Spleen (tissue), 13 donors: ENCODE measurements at regions of chr9 and their contacts with region 1.

Region 1: DNA sequence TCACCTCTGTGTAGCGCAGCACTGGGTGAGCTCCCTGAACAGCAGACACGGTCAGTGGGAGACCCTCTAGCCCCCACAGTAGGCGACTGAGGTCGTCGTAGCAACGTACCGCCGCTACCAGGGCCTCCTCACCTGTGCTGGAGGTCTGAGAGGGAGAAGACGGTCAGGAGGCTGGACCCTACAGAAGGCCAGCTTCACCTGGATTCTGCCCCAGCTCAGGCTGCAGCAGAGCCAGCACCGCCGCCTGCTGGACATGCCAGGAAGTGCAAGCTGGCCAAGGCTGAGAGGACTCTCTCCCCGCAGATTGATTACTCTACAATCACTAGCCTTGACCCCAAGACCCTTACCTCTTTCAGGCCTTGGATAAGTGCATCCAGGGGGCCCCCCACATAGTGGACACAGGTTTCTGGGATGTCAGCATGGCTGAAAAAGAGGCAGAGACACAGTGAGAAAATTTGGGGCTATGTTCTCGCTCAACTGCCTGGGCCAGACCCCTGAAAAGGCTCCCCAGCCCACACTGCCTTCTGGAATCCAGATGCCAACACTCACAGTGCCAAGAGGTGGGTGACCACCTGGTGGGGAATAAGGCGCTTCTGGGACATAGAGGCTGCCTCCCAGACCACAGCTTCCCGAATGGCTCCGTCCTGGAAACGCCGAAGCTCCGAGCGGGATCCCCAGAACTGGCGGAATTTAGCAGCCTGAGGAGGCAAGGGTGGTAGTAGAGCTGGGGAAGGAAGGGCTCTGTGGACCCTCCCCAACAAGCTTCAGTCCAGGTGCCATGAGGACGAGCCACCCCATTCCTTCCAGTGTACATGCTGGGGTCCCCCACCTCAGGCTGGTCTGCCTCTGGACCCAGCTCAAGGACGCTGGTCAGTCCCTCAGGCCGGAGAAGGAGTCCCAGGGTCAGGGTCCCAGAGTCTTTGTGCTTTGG is 6.9 kb downstream of the NOL6 start:
- DNase-seq: peak; percentile 92
- H3K4me3 ChIP-seq: no peak overlapping the region
- H3K27ac ChIP-seq: no peak overlapping the region
- H3K4me1 ChIP-seq: peaks cover 0 to 18% (median 3%) of the 10 kb centered on the region in 6 donors
- H3K27me3 ChIP-seq: no peaks in the 10 kb centered on the region
- CTCF ChIP-seq: peak; percentile 82 to 97 (median 95)
- POLR2A ChIP-seq: no peak

Region 2: GRCh38 chr9:33287087-33287490 is 179.7 kb before region 1 on chr9:
- intact Hi-C with region 1: loop called (anchors 10 kb)
- DNase-seq: no peak
- H3K4me3 ChIP-seq: no peak overlapping the region
- H3K27ac ChIP-seq: peak overlapping the region in 4 of 8 donors; percentile 29 to 54 (median 42)
- H3K4me1 ChIP-seq: peaks cover 13 to 55% (median 32%) of the 10 kb centered on the region in 6 donors
- H3K27me3 ChIP-seq: no peaks in the 10 kb centered on the region
- CTCF ChIP-seq: peak; percentile 29 to 71 (median 68)
- POLR2A ChIP-seq: no peak

Region 3: GRCh38 chr9:33350310-33350709 is 116.5 kb before region 1 on chr9:
- intact Hi-C with region 1: no loop called
- DNase-seq: no peak
- H3K4me3 ChIP-seq: no peak overlapping the region
- H3K27ac ChIP-seq: no peak overlapping the region
- H3K4me1 ChIP-seq: peaks cover 0 to 13% (median 0%) of the 10 kb centered on the region in 6 donors
- H3K27me3 ChIP-seq: no peaks in the 10 kb centered on the region
- CTCF ChIP-seq: no peak
- POLR2A ChIP-seq: no peak

Region 4: DNA sequence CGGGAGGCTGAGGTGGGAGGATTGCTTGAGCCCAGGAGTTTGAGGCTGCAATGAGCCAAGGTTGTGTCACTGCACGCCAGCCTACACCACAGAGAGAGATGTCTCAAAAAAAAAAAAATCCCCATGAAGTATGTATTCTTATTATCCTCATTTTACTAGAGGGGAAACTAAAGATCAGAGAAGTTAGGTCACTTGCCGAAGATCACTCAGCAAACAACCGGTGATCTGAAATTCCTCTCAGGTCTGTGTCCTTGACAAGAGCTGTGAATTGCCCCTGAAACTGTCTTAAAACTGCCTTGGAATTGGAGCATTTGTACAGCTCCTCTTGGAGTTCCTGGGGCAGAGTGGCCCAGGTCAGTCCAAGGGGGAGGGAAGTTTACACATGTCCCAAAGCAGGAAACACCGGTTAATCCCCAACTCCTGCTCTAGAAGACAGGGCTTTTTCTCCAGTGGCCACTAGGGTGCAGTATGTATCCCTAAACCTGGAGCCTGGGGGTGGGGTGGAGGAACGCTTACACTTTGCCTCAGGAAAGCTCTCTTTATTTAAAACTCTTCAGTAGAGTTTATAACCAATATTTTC is 92.1 kb before region 1 on chr9:
- intact Hi-C with region 1: loop called (anchors 10 kb)
- DNase-seq: peak; percentile 81
- H3K4me3 ChIP-seq: no peak overlapping the region
- H3K27ac ChIP-seq: peak overlapping the region in 5 of 8 donors; percentile 22 to 72 (median 56)
- H3K4me1 ChIP-seq: peaks cover 0 to 29% (median 21%) of the 10 kb centered on the region in 6 donors
- H3K27me3 ChIP-seq: no peaks in the 10 kb centered on the region
- CTCF ChIP-seq: peak; percentile 54 to 88 (median 82)
- POLR2A ChIP-seq: no peak

Region 5: GRCh38 chr9:33535541-33535940 is 68.7 kb after region 1 on chr9:
- intact Hi-C with region 1: no loop called
- DNase-seq: no peak
- H3K4me3 ChIP-seq: no peak overlapping the region
- H3K27ac ChIP-seq: no peak overlapping the region
- H3K4me1 ChIP-seq: no peaks in the 10 kb centered on the region
- H3K27me3 ChIP-seq: peaks cover 0 to 6% (median 0%) of the 10 kb centered on the region in 7 donors
- CTCF ChIP-seq: no peak
- POLR2A ChIP-seq: no peak